A549 (cell line): ENCODE measurements at regions of chr1 and their contacts with region 1.

Region 1: DNA sequence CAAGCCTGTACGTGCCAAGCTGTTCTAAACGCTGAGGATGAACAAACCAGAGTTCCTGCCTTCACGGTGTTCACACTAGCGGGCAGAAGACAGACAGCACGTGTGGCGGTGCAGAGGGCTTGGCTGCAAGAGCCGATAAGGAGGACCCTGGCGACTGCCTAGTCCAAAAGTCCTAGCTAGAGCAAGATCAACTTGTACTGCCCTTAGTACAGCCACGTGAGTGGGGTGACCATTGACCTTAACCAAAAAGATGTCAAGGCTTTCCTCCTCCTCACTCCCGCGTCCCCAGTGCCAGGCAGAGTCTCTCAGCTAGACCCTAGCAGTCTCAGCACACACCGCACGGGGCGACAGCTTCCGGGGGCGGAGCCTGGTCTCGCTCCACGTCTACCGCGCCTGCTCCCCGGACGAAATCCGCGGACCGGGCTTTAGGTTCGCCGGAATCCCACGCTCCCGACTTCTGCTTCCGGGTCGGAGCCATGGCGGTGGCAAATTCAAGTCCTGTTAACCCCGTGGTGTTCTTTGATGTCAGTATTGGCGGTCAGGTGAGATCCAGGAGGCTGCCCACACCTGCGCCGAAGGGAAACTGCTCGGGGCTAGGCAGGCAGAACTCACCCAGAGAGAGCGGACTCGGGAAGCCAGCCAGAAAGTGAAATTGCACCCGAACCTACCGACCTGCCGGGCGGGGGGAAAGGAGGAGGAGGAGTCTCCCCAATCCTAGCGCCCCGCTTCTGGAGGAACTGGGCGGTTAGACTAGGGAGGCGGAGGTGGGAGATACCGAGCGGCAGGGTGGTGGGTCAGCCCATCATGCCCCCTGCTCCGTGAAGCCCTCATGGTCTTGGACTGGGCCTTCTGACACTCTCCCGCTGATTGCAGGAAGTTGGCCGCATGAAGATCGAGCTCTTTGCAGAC is at the start of gene PPIH:
- DNase-seq: peak; percentile 82 to 90
- ATAC-seq: peak; percentile 100
- H3K4me3 ChIP-seq: peak within 1 kb of the TSS; percentile 75
- H3K27ac ChIP-seq: peak within 1 kb of the TSS; percentile 83 to 96
- H3K4me1 ChIP-seq: peaks cover 8% of the 10 kb centered on the region; the same call in 1 of the 3 replicates
- CTCF ChIP-seq: no peak
- EP300 ChIP-seq: no peak
- POLR2A ChIP-seq: peak; percentile 87
- RAD21 ChIP-seq: no peak
- polyA plus RNA-seq, gene PPIH: 50.3 and 68.9 TPM in 2 replicates

Region 2: DNA sequence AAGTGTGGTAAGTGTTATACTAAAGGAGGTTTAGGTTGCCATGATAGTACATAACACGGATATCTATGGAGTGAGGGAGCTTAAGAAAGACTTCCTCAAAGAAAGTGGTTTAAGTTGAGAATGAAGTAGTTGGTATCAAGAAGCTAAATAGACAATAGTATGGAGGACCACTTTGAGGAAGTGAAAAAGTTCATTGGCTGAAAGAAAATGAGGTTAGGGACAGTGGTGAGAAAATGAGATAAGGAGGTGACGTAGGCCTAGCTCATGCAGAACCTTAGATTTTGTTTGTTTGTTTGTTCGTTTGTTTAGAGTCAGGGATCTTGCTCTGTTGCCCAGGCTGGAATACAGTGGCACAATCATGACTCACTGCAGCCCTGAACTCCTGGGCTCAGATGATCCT is 72.2 kb before region 1 on chr1:
- CTCF ChIA-PET with region 1: no interaction called
- POLR2A ChIA-PET with region 1: no interaction called
- DNase-seq: no peak
- ATAC-seq: no peak
- H3K4me3 ChIP-seq: no peak overlapping the region
- H3K27ac ChIP-seq: no peak overlapping the region
- H3K4me1 ChIP-seq: no peaks in the 10 kb centered on the region
- CTCF ChIP-seq: no peak
- EP300 ChIP-seq: no peak
- POLR2A ChIP-seq: no peak
- RAD21 ChIP-seq: no peak

Region 3: DNA sequence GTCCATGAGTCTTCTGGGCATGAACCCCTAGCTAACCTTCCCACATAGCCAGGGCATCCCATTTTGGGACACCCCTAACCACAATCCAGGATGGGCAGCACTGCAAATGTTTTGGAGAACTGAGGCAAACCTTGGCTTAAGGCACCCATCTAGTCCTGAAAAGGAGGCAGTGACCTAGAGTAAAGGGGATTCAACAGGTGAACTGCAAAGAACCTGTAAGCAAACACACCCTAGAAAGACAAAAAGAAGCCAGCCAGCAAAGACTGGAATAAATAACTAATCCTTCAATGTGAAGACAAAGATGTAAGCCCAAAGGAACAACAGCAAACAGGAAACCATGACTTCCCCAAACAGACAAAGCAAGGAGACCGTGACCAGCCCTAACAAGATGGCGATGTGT is 56.8 kb before region 1 on chr1:
- CTCF ChIA-PET with region 1: no interaction called
- POLR2A ChIA-PET with region 1: no interaction called
- DNase-seq: no peak
- ATAC-seq: no peak
- H3K4me3 ChIP-seq: no peak overlapping the region
- H3K27ac ChIP-seq: no peak overlapping the region
- H3K4me1 ChIP-seq: no peaks in the 10 kb centered on the region
- CTCF ChIP-seq: no peak
- EP300 ChIP-seq: no peak
- POLR2A ChIP-seq: no peak
- RAD21 ChIP-seq: no peak

Region 4: GRCh38 chr1:42681741-42682483 is 23.7 kb after region 1 on chr1 and contains the start of gene YBX1:
- CTCF ChIA-PET with region 1: interaction called, 3 read pairs
- POLR2A ChIA-PET with region 1: interaction called, 18 read pairs
- DNase-seq: peak; percentile 95 to 97
- ATAC-seq: peak; percentile 92 to 96
- H3K4me3 ChIP-seq: peak within 1 kb of the TSS; percentile 94
- H3K27ac ChIP-seq: peak within 1 kb of the TSS; percentile 92 to 98
- H3K4me1 ChIP-seq: peaks cover 34% of the 10 kb centered on the region
- CTCF ChIP-seq: no peak
- EP300 ChIP-seq: no peak
- POLR2A ChIP-seq: peak; percentile 53
- RAD21 ChIP-seq: no peak
- polyA plus RNA-seq, gene YBX1: 345 and 488 TPM in 2 replicates